ENCODE measurements at regions of chr6 and their contacts with region 1.

Region 1: GRCh38 chr6:106114492-106115265 is 28.5 kb downstream of the PRDM1 start:
- DNase-seq: peak; percentile 55
- H3K4me3 Mint-ChIP-seq: peak overlapping the region; percentile 31
- H3K27ac Mint-ChIP-seq: peak overlapping the region; percentile 78
- H3K4me1 Mint-ChIP-seq: peaks cover 89% of the 10 kb centered on the region
- H3K27me3 Mint-ChIP-seq: no peaks in the 10 kb centered on the region

Region 2: DNA sequence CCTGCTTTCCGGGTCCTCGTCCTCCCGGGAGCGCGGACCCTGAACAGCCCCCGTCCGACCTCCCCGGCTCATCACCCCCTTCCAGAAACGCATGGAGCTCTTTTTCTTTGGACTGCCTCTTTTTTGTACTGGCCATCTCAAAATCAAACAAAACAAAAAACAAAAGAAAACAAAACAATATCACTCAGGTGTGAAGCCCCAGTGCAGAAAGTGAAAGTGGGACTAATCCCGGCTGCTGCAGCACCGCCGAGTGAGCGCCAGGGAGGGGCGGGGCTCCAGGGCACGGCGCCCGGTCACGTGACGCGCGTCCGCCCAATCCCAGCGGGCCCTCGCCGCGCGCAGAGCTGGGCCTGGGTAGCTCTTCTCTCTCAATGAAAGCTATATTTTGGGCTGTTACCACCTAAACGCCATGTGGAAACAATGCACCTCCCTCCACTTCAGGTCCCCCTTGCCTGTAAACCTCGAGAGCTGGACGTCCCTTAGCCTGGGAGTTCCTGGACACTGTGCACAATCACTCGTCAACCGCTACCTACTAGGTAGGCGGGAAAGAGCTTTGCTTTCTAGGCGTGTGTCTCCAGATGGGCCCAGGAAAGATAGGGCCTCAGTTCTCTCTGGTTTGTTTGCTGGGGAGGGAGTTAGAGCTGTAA is 122.2 kb before region 1 on chr6:
- intact Hi-C with region 1: no loop called
- DNase-seq: peak; percentile 89
- H3K4me3 Mint-ChIP-seq: peak overlapping the region; percentile 94
- H3K27ac Mint-ChIP-seq: peak overlapping the region; percentile 81
- H3K4me1 Mint-ChIP-seq: peaks cover 57% of the 10 kb centered on the region
- H3K27me3 Mint-ChIP-seq: peaks cover 23% of the 10 kb centered on the region

Region 3: DNA sequence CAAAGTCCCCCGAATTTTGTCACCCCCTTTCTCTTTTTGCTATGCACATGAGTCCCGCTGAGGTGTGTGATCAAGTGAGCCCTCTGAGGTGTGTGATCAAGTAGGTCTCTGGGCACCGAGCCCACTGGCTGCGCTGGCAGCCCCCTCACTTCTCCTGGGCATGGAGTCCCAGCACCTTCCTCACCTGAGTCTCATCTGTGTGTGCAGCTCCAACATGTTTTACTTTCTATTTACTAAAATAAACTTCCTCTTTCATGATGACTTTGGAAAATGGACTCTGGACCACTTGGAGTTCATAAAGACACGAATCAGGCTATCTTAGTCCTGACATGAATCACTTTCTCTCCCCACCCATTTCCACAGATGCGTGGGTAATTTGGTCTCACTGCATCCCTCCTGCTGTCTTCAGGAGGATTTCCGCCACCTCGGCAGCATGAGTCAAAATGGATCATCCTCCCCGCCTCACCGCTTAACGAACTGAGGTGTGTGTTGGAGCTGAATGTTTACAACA is 11.3 kb after region 1 on chr6:
- intact Hi-C with region 1: loop called (anchors 1 kb)
- DNase-seq: no peak
- H3K4me3 Mint-ChIP-seq: peak overlapping the region; percentile 4
- H3K27ac Mint-ChIP-seq: peak overlapping the region; percentile 88
- H3K4me1 Mint-ChIP-seq: peaks cover 62% of the 10 kb centered on the region
- H3K27me3 Mint-ChIP-seq: no peaks in the 10 kb centered on the region

Region 4: GRCh38 chr6:106141441-106142237 is 27.0 kb after region 1 on chr6:
- intact Hi-C with region 1: loop called (anchors 1 kb)
- DNase-seq: peak; percentile 35
- H3K4me3 Mint-ChIP-seq: peak overlapping the region; percentile 55
- H3K27ac Mint-ChIP-seq: peak overlapping the region; percentile 98
- H3K4me1 Mint-ChIP-seq: peaks cover 63% of the 10 kb centered on the region
- H3K27me3 Mint-ChIP-seq: no peaks in the 10 kb centered on the region

Region 5: GRCh38 chr6:106173124-106173879 is 58.6 kb after region 1 on chr6:
- intact Hi-C with region 1: no loop called
- DNase-seq: no peak
- H3K4me3 Mint-ChIP-seq: no peak overlapping the region
- H3K27ac Mint-ChIP-seq: peak overlapping the region; percentile 29
- H3K4me1 Mint-ChIP-seq: peaks cover 48% of the 10 kb centered on the region
- H3K27me3 Mint-ChIP-seq: no peaks in the 10 kb centered on the region

Region 6: GRCh38 chr6:106187424-106187982 is 72.8 kb after region 1 on chr6:
- intact Hi-C with region 1: loop called (anchors 1 kb)
- DNase-seq: no peak
- H3K4me3 Mint-ChIP-seq: peak overlapping the region; percentile 48
- H3K27ac Mint-ChIP-seq: peak overlapping the region; percentile 86
- H3K4me1 Mint-ChIP-seq: peaks cover 68% of the 10 kb centered on the region
- H3K27me3 Mint-ChIP-seq: no peaks in the 10 kb centered on the region

Measured in activated T-helper 2 cell treated with anti-CD3 and anti-CD28 coated beads, Interferon-gamma antibody, Interleukin-2, Interleukin-4, amounts not matched to agents 10 μg/mL and 5 μg/mL and 100 μg/mL, durations not matched to agents 14 hours and 24 hours and 36 hours (primary cell).